ENCODE measurements at regions of chr17 and their contacts with region 1.

Region 1: GRCh38 chr17:47840740-47841603 is at the start of gene SCRN2:
- ATAC-seq: peak; percentile 81 to 91 (median 89)
- H3K4me3 ChIP-seq: peak within 1 kb of the TSS; percentile 44 to 80 (median 58)
- H3K27ac ChIP-seq: peak within 1 kb of the TSS in 1 of 2 donors; percentile 43
- H3K4me1 ChIP-seq: peaks cover 11 to 16% of the 10 kb centered on the region in 2 donors
- total RNA-seq, gene SCRN2: 10.8 to 38.6 (median 21.6) TPM

Region 2: DNA sequence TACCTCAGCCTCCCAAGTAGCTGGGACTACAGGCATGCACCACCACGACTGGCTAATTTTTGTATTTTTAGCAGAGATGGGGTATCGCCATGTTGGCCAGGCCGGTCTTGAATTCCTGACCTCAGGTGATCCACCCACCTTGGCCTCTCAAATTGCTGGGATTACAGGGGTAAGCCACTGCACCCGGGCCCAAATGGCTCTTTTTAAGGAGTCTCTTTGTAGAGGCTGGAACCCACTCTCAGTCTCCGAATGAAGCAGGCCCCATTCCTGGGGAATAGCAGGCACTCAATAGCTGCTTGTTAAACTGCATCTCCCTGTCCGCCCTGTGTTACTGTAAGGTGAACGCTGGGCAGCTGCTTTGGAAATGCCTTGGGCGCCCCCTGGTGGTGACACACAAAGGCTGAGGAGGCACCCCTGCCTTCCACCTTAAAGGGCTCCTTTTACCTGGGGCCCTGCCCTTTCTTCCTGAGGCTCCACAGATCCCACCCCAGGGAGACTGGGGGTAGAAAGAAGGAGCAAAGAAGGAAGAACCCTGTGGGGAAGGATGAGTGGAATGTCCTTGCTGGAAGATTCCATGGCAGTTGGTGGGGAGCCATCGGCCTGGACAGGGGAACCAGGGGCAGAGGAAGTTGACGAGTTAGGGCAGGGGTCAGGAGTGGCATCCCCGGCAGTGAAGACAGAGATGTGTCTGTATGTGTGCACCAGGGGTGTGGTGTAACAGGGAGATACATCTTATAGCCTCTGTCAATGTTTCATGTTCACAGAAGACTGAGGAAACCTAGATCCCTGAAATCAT is 49.0 kb after region 1 on chr17:
- in situ Hi-C with region 1: loop called in 3 of 9 experiments (anchors 5 to 10 kb)
- ATAC-seq: peak; percentile 94 to 100 (median 96)
- H3K4me3 ChIP-seq: no peak overlapping the region
- H3K27ac ChIP-seq: no peak overlapping the region
- H3K4me1 ChIP-seq: peaks cover 3 to 4% of the 10 kb centered on the region in 2 donors

Region 3: DNA sequence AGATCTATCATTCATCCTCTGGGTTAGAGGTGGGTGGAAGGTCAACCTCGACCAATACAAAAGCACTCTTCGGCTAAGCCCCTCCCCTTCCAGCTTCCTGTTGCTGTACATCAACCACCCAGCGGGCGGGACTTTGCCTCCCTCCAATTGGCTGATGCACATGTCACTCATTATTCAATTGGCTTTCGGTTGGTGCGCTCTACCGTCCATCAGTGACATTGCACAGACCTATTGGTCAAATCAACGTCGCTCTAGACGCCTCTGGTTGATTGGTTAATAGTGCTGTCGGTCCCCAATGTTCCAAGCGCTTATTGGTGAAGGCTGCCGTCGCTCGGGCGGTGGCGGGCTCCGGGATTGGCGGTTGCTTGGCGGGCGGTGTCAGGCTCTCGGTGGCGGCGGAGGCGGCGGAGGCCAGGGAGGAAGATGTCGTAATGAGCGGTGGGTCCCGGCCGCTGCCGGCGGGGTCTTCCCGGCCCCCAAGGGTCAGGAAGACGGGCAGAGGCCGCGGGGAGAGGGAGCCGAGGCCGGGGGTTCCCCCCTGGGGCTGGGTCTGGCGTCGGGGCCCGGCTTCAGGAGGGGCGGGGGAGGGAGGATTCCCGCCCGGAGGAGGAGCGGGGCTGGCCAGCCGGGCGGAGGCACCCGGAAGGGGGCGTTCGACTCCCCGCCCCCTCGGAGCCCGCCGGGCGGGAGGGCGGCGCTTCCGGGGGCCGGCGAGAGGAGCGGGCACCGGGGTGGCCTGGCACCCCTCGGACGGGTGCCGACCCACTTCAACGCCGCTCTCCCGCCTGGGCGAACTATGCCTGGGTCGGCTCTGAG is 55.1 kb after region 1 on chr17 and contains the start of gene SP2:
- in situ Hi-C with region 1: loop called in 2 of 9 experiments (anchors 5 to 10 kb)
- ATAC-seq: peak; percentile 88 to 94 (median 94)
- H3K4me3 ChIP-seq: peak within 1 kb of the TSS; percentile 87 to 97 (median 93)
- H3K27ac ChIP-seq: peak within 1 kb of the TSS; percentile 99 to 100
- H3K4me1 ChIP-seq: peaks cover 8 to 10% of the 10 kb centered on the region in 2 donors
- total RNA-seq, gene SP2: 1.4 to 6.9 (median 4.4) TPM